ENCODE measurements at regions of chr3 and their contacts with region 1.

Region 1: GRCh38 chr3:28286595-28286994 is 45.2 kb downstream of the CMC1 start:
- DNase-seq: peak in 2 of 9 experiments; percentile 60 to 71
- ATAC-seq: peak; percentile 83
- H3K4me3 ChIP-seq: peak overlapping the region in 1 of 2 experiments; percentile 21
- H3K4me3 Mint-ChIP-seq: no peak overlapping the region
- H3K27ac ChIP-seq: peak overlapping the region in 1 of 2 experiments; percentile 36
- H3K27ac Mint-ChIP-seq: no peak overlapping the region
- H3K4me1 ChIP-seq: no peaks in the 10 kb centered on the region
- H3K4me1 Mint-ChIP-seq: peaks cover 34% of the 10 kb centered on the region
- H3K27me3 ChIP-seq: no peaks in the 10 kb centered on the region
- H3K27me3 Mint-ChIP-seq: no peaks in the 10 kb centered on the region
- CTCF ChIP-seq: peak; percentile 60

Region 2: DNA sequence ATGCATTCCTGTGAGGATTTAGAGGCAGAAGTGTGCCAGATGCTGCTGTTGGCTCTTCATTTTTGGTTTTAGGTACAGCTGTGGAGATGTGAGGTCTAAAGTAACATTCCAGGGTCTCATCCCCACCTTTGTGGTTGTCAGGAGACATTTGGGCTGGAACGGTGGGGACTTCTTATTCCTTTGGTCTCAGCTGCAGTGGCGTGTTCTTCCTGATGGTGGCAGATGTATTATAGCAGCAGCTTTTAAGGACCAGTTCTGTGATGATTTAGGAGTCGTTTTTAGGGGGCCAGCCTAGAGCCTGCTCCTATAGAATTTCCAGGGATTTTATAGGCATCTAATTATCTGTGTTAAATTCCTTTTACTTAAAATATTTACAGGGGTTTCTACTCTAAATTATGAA is 343.5 kb before region 1 on chr3:
- CTCF ChIA-PET with region 1: no interaction called
- POLR2A ChIA-PET with region 1: no interaction called
- intact Hi-C with region 1: loop called in 1 of 2 experiments (anchors 1 kb)
- DNase-seq: peak in 2 of 9 experiments; percentile 34 to 41
- ATAC-seq: no peak
- H3K4me3 ChIP-seq: no peak overlapping the region
- H3K4me3 Mint-ChIP-seq: no peak overlapping the region
- H3K27ac ChIP-seq: no peak overlapping the region
- H3K27ac Mint-ChIP-seq: no peak overlapping the region
- H3K4me1 ChIP-seq: no peaks in the 10 kb centered on the region
- H3K4me1 Mint-ChIP-seq: peaks cover 9% of the 10 kb centered on the region
- H3K27me3 ChIP-seq: no peaks in the 10 kb centered on the region
- H3K27me3 Mint-ChIP-seq: no peaks in the 10 kb centered on the region
- CTCF ChIP-seq: peak; percentile 19

Region 3: GRCh38 chr3:28018925-28019718 is 267.5 kb before region 1 on chr3:
- CTCF ChIA-PET with region 1: no interaction called
- POLR2A ChIA-PET with region 1: no interaction called
- intact Hi-C with region 1: loop called in 1 of 2 experiments (anchors 10 kb)
- DNase-seq: no peak
- ATAC-seq: no peak
- H3K4me3 ChIP-seq: no peak overlapping the region
- H3K4me3 Mint-ChIP-seq: no peak overlapping the region
- H3K27ac ChIP-seq: no peak overlapping the region
- H3K27ac Mint-ChIP-seq: no peak overlapping the region
- H3K4me1 ChIP-seq: no peaks in the 10 kb centered on the region
- H3K4me1 Mint-ChIP-seq: no peaks in the 10 kb centered on the region
- H3K27me3 ChIP-seq: no peaks in the 10 kb centered on the region
- H3K27me3 Mint-ChIP-seq: no peaks in the 10 kb centered on the region
- CTCF ChIP-seq: no peak

Region 4: GRCh38 chr3:28247286-28247685 is 39.3 kb before region 1 on chr3:
- CTCF ChIA-PET with region 1: interaction called, 3 read pairs
- POLR2A ChIA-PET with region 1: no interaction called
- intact Hi-C with region 1: loop called in 1 of 2 experiments (anchors 5 kb)
- DNase-seq: peak in 1 of 9 experiments; percentile 23
- ATAC-seq: no peak
- H3K4me3 ChIP-seq: no peak overlapping the region
- H3K4me3 Mint-ChIP-seq: peak overlapping the region; percentile 30
- H3K27ac ChIP-seq: no peak overlapping the region
- H3K27ac Mint-ChIP-seq: peak overlapping the region; percentile 42
- H3K4me1 ChIP-seq: peaks cover 39% of the 10 kb centered on the region
- H3K4me1 Mint-ChIP-seq: peaks cover 86% of the 10 kb centered on the region
- H3K27me3 ChIP-seq: no peaks in the 10 kb centered on the region
- H3K27me3 Mint-ChIP-seq: no peaks in the 10 kb centered on the region
- CTCF ChIP-seq: no peak

Region 5: GRCh38 chr3:28301688-28302087 is 15.1 kb after region 1 on chr3:
- CTCF ChIA-PET with region 1: interaction called, 3 read pairs
- POLR2A ChIA-PET with region 1: no interaction called
- intact Hi-C with region 1: loop called in 1 of 2 experiments (anchors 2 kb)
- DNase-seq: no peak
- ATAC-seq: no peak
- H3K4me3 ChIP-seq: no peak overlapping the region
- H3K4me3 Mint-ChIP-seq: no peak overlapping the region
- H3K27ac ChIP-seq: no peak overlapping the region
- H3K27ac Mint-ChIP-seq: no peak overlapping the region
- H3K4me1 ChIP-seq: no peaks in the 10 kb centered on the region
- H3K4me1 Mint-ChIP-seq: peaks cover 17% of the 10 kb centered on the region
- H3K27me3 ChIP-seq: no peaks in the 10 kb centered on the region
- H3K27me3 Mint-ChIP-seq: no peaks in the 10 kb centered on the region
- CTCF ChIP-seq: no peak